Panc1 (cell line): ENCODE measurements at regions of chr11 and their contacts with region 1.

Region 1: GRCh38 chr11:8870411-8871170 is 40.4 kb upstream of the AKIP1 start:
- DNase-seq: no peak
- ATAC-seq: peak; percentile 90
- H3K4me3 ChIP-seq: peak overlapping the region; percentile 67 to 72
- H3K27ac ChIP-seq: peak overlapping the region; percentile 73
- H3K4me1 ChIP-seq: peaks cover 30% of the 10 kb centered on the region
- H3K27me3 ChIP-seq: no peaks in the 10 kb centered on the region
- CTCF ChIP-seq: peak; percentile 55

Region 2: DNA sequence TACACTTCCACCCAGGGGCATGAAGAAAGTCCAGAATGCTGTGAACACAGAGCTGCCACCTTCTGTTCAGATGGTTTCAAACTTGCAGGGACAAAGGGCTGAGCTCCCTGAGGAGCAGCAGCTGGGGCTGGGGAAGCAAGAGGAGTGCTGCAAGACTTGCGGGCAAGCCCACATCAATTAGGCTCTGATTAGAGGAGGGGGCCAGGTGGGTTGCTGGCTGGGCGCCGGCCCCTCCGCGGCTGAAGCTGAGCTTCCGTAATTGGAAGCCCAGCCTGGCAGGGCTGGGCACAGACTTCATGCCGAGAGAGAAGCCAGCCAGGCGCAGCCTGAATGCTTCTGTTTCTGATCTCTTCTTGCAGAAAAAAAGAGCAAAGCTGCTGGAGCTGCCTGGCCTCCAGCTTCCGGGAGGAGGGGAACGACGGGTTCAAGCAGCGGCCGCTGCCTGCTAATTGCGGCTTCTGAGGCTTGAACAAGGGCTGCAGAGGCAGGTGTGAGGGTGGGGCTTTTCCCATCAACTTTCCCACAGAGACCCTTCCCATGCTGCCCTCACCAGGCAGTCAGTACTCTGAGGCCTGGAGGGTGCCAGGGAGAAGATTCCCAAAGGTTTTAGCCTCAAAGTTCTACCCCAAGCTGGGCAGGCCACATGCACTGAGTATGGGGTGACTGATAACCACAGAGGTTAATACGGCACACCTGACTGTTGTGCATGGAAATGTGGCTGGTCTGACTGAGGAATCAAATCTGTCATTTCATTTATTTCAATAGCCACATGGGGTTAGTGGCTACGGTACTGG is 515.8 kb before region 1 on chr11:
- CTCF ChIA-PET with region 1: no interaction called
- POLR2A ChIA-PET with region 1: no interaction called
- in situ Hi-C with region 1: no loop called
- intact Hi-C with region 1: no loop called
- DNase-seq: no peak
- ATAC-seq: peak; percentile 61; the same call in 1 of the 2 replicates
- H3K4me3 ChIP-seq: no peak overlapping the region
- H3K27ac ChIP-seq: no peak overlapping the region
- H3K4me1 ChIP-seq: no peaks in the 10 kb centered on the region
- H3K27me3 ChIP-seq: peaks cover 5% of the 10 kb centered on the region
- CTCF ChIP-seq: no peak

Region 3: DNA sequence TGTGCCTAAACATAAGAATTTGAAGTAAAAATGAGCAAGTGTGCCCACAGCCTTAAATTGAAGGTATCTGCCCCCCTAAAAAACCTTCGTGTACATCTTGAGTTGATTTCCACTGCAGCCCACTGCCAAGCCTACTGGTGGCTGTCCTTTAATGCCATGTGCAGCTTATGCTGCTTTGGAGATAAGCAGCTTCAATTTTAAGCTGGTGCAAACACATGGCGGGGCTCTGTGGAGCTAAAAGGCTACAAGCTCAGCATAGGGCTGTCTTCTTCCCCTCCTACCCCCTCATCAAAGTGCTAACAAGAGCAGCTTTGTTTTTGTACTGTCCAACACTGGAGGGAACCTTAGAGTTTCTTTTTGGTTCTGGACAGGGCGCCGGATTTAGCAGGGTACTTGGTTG is 478.4 kb before region 1 on chr11:
- CTCF ChIA-PET with region 1: no interaction called
- POLR2A ChIA-PET with region 1: no interaction called
- in situ Hi-C with region 1: no loop called
- intact Hi-C with region 1: no loop called
- DNase-seq: no peak
- ATAC-seq: no peak
- H3K4me3 ChIP-seq: no peak overlapping the region
- H3K27ac ChIP-seq: no peak overlapping the region
- H3K4me1 ChIP-seq: no peaks in the 10 kb centered on the region
- H3K27me3 ChIP-seq: no peaks in the 10 kb centered on the region; the same call in 1 of the 2 replicates
- CTCF ChIP-seq: no peak

Region 4: DNA sequence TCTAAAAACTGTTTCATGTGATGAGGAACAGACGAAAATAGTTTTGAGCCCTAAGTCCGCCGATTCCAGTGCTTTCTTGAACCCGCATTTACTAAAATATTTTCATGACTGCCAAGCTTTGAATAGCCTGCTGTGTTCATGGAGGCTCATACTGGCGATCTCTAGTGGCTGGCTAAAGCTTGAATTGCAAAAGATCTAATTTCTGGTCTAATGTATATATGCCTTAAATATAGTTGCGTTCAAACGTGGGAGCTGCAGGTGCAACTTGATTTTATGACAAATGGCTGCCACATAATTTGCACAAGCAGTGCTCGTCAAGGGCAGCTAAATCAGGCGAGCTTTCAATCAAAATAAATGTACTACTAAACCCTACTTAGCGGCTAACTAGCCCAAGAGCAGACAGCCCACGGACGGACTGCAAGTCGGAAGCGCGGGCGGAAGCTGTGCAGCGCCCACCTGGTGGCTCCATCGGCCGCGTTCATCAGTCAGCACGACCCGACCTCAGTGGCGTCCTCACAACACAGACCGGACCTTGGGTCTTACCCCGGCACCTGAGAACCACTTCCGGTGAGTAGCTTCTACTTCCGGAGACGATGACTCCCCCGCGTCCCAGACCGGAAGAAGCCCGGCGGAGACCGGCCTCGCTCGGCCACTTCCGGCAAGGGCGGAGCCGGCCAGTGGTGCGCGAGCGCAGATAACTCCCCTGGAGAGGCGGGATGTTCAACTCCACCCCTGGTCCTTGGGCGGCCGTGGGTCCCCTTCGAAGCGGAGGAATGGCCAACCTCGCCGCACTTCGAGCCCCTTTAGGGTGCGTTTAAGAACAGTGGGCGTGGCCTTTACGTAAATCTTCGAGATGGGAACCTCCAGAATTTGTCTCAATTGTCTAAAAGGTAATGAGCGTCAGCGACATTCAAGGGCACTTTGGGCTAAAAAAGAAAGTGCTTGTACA is 181.9 kb before region 1 on chr11:
- CTCF ChIA-PET with region 1: no interaction called
- POLR2A ChIA-PET with region 1: interaction called, 8 read pairs
- in situ Hi-C with region 1: no loop called
- intact Hi-C with region 1: loop called (anchors 5 kb)
- DNase-seq: peak; percentile 98
- ATAC-seq: peak; percentile 92
- H3K4me3 ChIP-seq: peak overlapping the region; percentile 68 to 69
- H3K27ac ChIP-seq: peak overlapping the region; percentile 100
- H3K4me1 ChIP-seq: peaks cover 49% of the 10 kb centered on the region
- H3K27me3 ChIP-seq: no peaks in the 10 kb centered on the region
- CTCF ChIP-seq: peak; percentile 69; the same call in 1 of the 2 replicates

Region 5: GRCh38 chr11:8934749-8935478 is 64.3 kb after region 1 on chr11:
- CTCF ChIA-PET with region 1: no interaction called
- POLR2A ChIA-PET with region 1: no interaction called
- in situ Hi-C with region 1: no loop called
- intact Hi-C with region 1: no loop called
- DNase-seq: no peak
- ATAC-seq: no peak
- H3K4me3 ChIP-seq: no peak overlapping the region
- H3K27ac ChIP-seq: no peak overlapping the region
- H3K4me1 ChIP-seq: no peaks in the 10 kb centered on the region; the same call in 1 of the 2 replicates
- H3K27me3 ChIP-seq: no peaks in the 10 kb centered on the region
- CTCF ChIP-seq: no peak

Region 6: DNA sequence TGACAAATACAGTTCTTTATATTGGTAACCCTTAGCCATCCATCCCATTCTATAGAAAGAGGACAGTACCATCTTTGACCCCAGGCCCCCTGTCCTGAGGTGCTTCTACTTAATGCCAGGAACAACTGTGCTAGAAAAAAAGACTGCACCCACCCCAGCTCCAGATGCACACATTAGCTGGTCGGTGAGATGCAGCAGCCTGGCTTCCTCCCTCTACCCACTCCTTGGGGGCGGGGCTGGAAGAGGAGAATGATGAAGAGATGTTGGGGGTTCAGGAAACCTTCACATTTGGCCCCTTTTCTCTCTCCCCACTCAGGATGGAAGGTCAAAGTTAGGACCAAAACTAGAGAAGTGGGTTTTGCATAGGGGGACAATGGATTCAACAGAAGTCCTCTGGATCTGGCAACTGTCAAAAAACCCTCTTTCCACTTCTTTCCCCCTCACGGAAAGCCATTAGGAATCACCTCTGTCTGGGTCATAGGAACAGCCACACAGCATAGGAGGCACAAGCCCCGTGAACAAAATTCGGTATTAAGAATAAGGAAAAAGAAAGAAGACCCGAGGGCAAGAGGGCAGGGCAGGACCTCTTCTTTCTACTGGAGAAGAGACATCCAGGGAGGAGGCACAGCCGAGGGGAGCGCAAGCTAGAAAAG is 132.5 kb after region 1 on chr11:
- CTCF ChIA-PET with region 1: interaction called, 15 read pairs
- POLR2A ChIA-PET with region 1: no interaction called
- in situ Hi-C with region 1: no loop called
- intact Hi-C with region 1: no loop called
- DNase-seq: no peak
- ATAC-seq: no peak
- H3K4me3 ChIP-seq: peak overlapping the region; percentile 54 to 87
- H3K27ac ChIP-seq: peak overlapping the region; percentile 71
- H3K4me1 ChIP-seq: peaks cover 26% of the 10 kb centered on the region
- H3K27me3 ChIP-seq: no peaks in the 10 kb centered on the region
- CTCF ChIP-seq: no peak